Posterior cingulate gyrus (tissue), 11 donors: ENCODE measurements at regions of chr9 and their contacts with region 1.

Region 1: DNA sequence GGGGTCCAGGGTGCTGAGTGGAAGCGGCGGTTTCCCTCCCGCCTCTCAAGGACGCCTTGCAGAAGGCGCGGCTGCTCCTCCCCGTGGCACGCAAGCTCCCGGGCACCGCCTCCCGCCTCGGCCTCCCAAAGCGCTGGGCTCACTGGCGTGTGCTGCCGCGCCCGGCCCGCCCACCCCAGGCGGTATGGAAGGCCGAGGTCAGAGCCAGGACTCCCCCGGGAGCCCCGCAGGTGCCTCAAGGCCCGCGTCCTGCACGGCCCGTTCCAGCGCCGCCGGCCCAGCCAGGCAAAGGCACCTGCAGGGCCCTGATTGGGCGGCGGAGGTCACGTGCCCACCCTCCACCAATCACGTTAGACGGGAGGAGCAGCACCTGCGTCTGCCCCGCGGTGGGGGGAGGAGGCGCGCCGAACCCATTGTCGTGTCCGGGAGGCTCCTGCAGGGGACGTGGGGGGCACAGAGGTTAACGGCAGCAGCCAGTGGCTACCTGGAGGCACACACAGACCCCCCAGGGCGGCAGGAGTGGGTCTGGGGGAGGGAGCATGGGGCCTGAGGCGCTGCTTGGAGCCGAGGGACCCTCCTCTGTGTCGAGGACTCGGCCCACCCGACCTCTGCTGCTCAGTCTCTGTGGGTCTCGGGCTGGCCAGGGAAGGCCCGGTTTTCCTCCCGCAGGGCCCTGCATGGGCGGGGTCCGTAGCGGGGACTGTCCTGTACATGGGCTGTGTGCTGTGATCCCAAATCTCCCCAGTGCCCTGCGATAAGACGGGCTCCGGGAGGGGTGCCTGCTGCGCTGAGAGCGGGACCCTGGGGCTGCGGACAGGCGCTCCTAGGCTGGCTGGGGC is 2.0 kb upstream of the LCN12 start:
- DNase-seq: peak; percentile 97 to 100 (median 99)

Region 2: GRCh38 chr9:136975644-136976043 is 25.6 kb after region 1 on chr9:
- intact Hi-C with region 1: loop called (anchors 2 kb)
- DNase-seq: peak in 9 of 10 donors; percentile 72 to 97 (median 84)

Region 3: DNA sequence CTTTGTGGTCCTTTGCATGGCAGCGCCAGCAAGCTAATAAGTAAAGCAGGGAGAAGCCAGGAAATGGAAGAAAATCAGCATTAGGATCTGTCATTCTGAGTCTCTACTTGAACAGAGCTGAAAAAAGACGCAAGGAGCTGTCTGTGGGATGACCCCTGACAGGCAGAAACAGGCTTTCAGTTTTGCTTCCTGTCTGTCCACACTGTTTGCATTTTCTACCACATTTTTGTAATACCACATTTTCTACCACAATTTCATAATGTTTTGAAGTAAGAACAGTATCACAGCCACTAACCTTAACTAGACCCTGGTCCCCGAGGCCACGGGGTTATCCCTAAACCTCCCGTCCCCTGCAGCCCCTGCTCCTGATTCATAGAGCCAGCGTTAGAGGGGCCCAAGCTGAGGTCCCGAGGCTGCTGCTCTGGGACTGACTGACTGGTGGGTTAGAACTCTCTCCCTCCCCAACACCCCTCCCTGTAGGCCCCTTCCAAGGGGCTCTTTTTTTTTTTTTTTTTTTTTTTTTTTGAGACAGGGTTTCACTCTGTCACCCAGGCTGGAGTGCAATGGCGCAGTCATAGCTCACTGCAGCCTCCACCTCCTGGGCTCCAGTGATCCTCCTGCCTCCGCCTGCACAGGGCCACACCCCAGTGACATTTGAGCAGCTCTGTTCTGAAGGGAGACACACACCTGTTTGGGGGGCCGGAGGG is 50.3 kb after region 1 on chr9:
- intact Hi-C with region 1: no loop called
- DNase-seq: no peak

Region 4: GRCh38 chr9:137034863-137035761 is 85.1 kb after region 1 on chr9:
- intact Hi-C with region 1: loop called (anchors 1 kb)
- DNase-seq: peak; percentile 80 to 99 (median 88)